ENCODE measurements at regions of chr12 and their contacts with region 1.

Region 1: GRCh38 chr12:132908145-132909044 is 21.0 kb upstream of the CHFR start:
- DNase-seq: peak; percentile 99
- ATAC-seq: peak; percentile 94
- H3K4me3 Mint-ChIP-seq: peak overlapping the region; percentile 84
- H3K27ac Mint-ChIP-seq: peak overlapping the region; percentile 88
- H3K4me1 Mint-ChIP-seq: peaks cover 17% of the 10 kb centered on the region
- H3K27me3 Mint-ChIP-seq: peaks cover 2% of the 10 kb centered on the region

Region 2: DNA sequence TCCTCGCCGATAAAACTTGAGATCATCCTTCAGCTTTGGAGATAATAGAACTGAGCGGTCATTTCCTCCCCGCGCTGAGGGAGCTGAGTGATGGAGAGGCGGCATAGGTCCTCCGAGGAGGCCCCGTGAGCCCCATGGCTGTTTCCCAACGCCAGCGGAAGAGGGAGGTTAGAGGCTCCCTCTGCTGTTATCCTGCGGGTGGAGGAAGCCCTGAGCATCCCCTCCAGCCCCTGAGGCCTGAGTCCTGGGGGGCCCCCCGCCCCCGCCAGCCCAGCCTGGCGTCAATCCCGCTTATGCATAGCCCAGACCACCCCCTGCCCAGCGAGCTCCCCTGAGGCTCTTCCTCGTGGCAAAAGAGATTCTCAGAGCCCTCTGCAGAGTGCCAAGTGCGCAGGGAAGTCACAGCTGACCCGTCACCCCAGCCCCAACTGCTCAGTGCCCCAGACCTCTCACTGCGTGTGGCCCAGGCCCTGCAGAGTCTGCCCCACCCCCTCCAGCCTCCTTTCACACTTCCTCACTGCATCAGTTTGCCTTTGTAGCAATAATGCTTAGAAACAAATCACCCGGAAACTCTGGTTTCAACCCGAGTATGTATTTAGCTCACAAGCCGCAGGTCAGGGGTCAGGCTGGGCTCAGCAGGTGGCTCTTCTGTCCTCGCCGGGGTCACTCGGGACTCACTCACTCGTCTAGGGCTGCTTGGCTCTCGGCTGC is 534.3 kb before region 1 on chr12:
- CTCF ChIA-PET with region 1: no interaction called
- POLR2A ChIA-PET with region 1: no interaction called
- intact Hi-C with region 1: no loop called
- DNase-seq: no peak
- ATAC-seq: no peak
- H3K4me3 Mint-ChIP-seq: no peak overlapping the region
- H3K27ac Mint-ChIP-seq: no peak overlapping the region
- H3K4me1 Mint-ChIP-seq: no peaks in the 10 kb centered on the region
- H3K27me3 Mint-ChIP-seq: peaks cover 52% of the 10 kb centered on the region

Region 3: DNA sequence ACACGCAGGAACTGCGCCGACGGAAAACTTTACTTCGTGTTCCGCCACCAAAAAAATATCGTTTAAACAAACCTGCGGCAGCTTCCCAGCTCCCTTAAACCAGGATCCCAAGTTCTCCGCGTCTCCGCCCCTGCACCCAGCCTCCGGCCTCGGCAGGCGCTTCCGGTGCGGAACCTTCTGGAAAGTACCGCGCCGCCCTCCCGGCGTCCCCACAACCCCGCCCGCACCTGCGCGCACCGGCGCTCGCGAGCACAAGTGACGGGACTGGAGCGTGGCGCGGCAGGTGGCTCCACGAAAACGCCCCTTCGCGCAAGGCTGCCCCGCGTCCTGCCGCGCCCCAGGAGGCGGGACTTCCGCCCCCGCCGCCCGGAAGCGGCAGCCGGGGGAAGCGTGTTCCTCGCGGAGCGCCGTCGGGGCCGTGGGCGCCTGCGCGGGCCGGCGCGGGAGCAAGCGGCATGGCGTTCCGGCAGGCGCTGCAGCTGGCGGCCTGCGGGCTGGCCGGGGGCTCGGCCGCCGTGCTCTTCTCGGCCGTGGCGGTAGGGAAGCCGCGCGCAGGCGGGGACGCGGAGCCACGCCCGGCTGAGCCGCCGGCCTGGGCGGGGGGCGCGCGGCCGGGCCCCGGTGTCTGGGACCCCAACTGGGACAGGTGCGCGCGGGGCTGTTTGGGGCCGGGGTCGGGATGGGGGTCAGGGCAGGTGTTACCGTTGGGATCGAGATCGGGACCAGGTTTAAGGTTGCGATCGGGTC is 197.8 kb before region 1 on chr12 and contains the start of gene PGAM5:
- CTCF ChIA-PET with region 1: no interaction called
- POLR2A ChIA-PET with region 1: no interaction called
- intact Hi-C with region 1: loop called in 1 of 2 experiments (anchors 1 kb)
- DNase-seq: peak; percentile 92
- ATAC-seq: peak; percentile 92
- H3K4me3 Mint-ChIP-seq: peak within 1 kb of the TSS; percentile 75
- H3K27ac Mint-ChIP-seq: peak within 1 kb of the TSS; percentile 66
- H3K4me1 Mint-ChIP-seq: peaks cover 24% of the 10 kb centered on the region
- H3K27me3 Mint-ChIP-seq: no peaks in the 10 kb centered on the region
- total RNA-seq, gene PGAM5: 65.6 to 74.0 TPM

Region 4: DNA sequence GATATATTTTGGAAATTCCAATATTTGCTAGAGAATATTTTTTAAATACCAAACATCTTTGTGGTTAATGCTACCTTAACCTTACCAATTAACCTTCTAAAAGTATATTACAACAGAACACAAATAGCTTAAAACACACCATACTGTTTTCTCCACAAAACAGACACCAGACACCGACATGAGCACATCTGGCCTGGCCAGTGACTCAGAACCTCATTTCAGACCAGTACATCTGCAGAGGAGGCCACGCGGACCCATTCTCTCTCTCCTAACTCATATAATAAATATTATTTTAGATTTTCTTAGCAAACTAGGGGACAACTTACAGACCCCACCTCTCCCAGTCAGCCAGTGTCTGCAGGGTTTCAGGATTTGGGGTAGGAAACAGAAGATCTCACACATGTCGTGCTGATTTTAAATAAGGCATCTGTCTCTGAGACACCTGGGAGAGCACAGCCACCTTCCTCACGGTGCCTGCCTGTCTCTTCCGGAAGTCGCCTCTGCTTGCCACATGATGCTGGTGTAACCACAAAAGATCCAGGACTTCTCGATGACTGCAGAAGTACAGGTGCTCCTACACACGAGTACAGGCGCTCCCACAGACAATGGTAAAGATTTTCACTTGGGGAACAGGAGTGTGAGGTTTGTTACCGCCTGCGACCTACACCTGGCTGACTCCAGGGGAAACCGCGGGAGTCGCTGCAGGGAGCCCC is 137.1 kb before region 1 on chr12:
- CTCF ChIA-PET with region 1: interaction called, 14 read pairs
- POLR2A ChIA-PET with region 1: no interaction called
- intact Hi-C with region 1: loop called in 1 of 2 experiments (anchors 1 kb)
- DNase-seq: peak; percentile 71
- ATAC-seq: peak; percentile 82
- H3K4me3 Mint-ChIP-seq: peak overlapping the region; percentile 52
- H3K27ac Mint-ChIP-seq: peak overlapping the region; percentile 89
- H3K4me1 Mint-ChIP-seq: peaks cover 61% of the 10 kb centered on the region
- H3K27me3 Mint-ChIP-seq: no peaks in the 10 kb centered on the region

Region 5: GRCh38 chr12:132797820-132798570 is 110.4 kb before region 1 on chr12:
- CTCF ChIA-PET with region 1: no interaction called
- POLR2A ChIA-PET with region 1: no interaction called
- intact Hi-C with region 1: no loop called
- DNase-seq: no peak
- ATAC-seq: no peak
- H3K4me3 Mint-ChIP-seq: no peak overlapping the region
- H3K27ac Mint-ChIP-seq: no peak overlapping the region
- H3K4me1 Mint-ChIP-seq: no peaks in the 10 kb centered on the region
- H3K27me3 Mint-ChIP-seq: no peaks in the 10 kb centered on the region

Region 6: DNA sequence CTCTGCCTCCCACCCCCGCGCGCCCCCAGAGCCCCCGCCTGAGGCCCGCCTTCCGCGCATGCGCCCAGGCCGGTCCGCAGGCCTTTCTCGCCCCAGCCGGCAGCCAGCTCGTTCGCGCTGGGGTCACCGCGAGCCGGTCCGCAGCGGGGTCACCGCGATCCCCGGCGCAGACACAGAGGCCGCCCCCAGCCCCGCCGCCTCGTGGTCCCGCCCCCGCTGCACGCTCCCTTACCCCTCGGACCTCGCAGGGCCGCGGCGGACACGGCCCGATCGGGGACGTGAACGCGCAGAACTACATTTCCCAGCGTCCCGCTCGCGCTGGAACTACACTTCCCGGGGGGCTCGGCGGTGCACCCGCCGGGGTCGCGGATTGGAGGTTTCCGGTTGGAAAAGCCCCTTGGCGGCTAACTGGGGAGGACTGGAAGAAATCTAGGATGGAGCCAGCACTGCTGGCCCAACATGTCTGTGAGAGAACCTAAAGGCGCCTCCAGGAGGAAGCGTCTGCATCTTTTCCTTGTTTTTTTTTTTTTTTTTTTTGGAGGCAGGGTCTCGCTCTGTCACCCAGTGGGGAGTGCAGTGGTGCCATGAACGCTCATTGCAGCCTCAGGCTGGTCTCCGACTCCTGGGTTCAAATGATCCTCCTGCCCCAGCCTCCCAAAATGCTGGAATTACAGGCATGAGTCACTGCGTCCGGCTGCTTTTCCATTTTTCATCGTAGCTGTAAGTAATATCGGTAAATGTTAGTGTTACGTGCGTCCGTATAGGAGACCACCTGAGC is 47.8 kb after region 1 on chr12 and contains the start of gene ZNF605:
- CTCF ChIA-PET with region 1: no interaction called
- POLR2A ChIA-PET with region 1: no interaction called
- intact Hi-C with region 1: loop called (anchors 1 kb)
- DNase-seq: peak; percentile 93
- ATAC-seq: peak; percentile 91
- H3K4me3 Mint-ChIP-seq: peak within 1 kb of the TSS; percentile 93
- H3K27ac Mint-ChIP-seq: peak within 1 kb of the TSS; percentile 88
- H3K4me1 Mint-ChIP-seq: peaks cover 22% of the 10 kb centered on the region
- H3K27me3 Mint-ChIP-seq: no peaks in the 10 kb centered on the region
- total RNA-seq, gene ZNF605: 8.0 to 8.3 TPM

Region 7: GRCh38 chr12:133037207-133038005 is 129.0 kb after region 1 on chr12 and contains the start of gene ZNF84:
- CTCF ChIA-PET with region 1: no interaction called
- POLR2A ChIA-PET with region 1: no interaction called
- intact Hi-C with region 1: loop called (anchors 1 kb)
- DNase-seq: peak; percentile 98
- ATAC-seq: peak; percentile 97
- H3K4me3 Mint-ChIP-seq: peak within 1 kb of the TSS; percentile 85
- H3K27ac Mint-ChIP-seq: peak within 1 kb of the TSS; percentile 94
- H3K4me1 Mint-ChIP-seq: peaks cover 10% of the 10 kb centered on the region
- H3K27me3 Mint-ChIP-seq: no peaks in the 10 kb centered on the region
- total RNA-seq, gene ZNF84: 21.5 to 24.1 TPM

Region 8: DNA sequence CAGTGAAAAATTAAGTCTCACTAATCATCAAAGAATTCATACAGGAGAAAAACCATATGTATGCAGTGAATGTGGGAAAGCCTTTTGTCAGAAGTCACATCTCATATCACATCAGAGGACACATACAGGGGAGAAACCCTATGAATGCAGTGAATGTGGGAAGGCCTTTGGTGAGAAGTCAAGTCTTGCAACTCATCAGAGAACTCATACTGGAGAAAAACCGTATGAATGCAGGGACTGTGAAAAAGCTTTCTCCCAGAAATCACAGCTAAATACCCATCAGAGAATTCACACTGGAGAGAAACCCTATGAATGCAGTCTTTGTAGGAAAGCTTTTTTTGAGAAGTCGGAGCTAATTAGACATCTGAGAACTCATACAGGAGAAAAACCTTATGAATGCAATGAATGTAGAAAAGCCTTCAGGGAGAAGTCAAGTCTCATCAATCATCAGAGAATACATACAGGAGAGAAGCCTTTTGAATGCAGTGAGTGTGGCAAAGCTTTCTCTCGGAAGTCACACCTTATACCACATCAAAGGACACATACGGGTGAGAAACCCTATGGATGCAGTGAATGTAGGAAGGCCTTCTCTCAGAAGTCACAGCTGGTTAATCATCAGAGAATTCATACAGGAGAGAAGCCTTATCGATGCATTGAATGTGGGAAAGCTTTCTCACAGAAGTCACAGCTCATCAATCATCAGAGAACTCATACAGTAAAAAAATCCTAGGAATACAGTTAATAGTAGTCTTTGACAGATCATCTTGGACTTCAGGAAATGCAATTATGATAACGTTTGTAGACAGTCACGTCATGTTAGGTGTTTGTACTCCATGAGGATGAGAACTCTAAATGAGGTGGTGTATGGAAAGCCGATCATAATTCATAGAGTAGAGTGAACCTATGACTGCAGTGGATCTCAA is 150.1 kb after region 1 on chr12:
- CTCF ChIA-PET with region 1: no interaction called
- POLR2A ChIA-PET with region 1: no interaction called
- intact Hi-C with region 1: no loop called
- DNase-seq: no peak
- ATAC-seq: no peak
- H3K4me3 Mint-ChIP-seq: no peak overlapping the region
- H3K27ac Mint-ChIP-seq: no peak overlapping the region
- H3K4me1 Mint-ChIP-seq: no peaks in the 10 kb centered on the region
- H3K27me3 Mint-ChIP-seq: no peaks in the 10 kb centered on the region

Region 9: DNA sequence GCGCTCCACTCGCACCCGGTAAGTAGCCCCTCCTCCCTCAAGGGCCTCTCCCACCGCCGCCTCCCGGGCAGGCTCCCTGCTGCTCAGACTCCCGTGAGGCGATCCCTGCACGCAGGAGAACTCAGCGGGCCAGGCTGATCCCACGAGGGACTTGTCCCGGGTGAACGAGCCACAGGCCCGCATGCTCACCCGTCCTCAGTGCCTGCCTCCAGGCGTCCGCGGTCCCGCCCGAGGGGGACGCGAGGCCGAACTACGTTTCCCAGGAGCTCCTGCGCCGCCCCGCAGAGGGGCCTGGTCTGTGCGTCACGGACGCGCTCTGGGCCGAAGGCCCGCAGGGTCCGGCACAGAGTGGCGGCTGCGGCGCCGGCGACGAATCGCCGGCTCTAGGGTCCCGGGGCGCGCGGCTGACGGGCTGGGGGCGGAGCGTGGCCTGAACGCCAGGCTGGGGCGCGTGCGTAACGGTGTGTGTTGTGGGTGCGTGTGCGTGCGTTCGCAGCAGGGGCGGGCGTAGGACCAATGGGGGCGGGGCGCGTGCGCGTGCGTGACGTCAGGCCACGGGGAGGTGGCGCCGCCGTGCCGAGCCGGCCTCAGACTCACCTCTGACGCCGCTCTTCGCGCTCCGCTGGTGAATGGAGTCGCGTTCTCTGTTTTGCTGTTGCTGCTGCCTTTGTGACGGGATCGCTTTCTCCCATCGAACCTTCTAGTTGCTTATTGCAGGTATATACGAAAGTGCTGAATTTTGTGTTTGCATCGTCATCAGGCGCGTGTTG is 221.8 kb after region 1 on chr12 and contains the starts of genes ZNF10 and ZNF891:
- CTCF ChIA-PET with region 1: no interaction called
- POLR2A ChIA-PET with region 1: no interaction called
- intact Hi-C with region 1: loop called in 1 of 2 experiments (anchors 1 kb)
- DNase-seq: peak; percentile 98
- ATAC-seq: peak; percentile 90
- H3K4me3 Mint-ChIP-seq: peak within 1 kb of the TSS; percentile 86
- H3K27ac Mint-ChIP-seq: peak within 1 kb of the TSS; percentile 98
- H3K4me1 Mint-ChIP-seq: peaks cover 15% of the 10 kb centered on the region
- H3K27me3 Mint-ChIP-seq: no peaks in the 10 kb centered on the region
- total RNA-seq, gene ZNF10: 4.8 to 5.1 TPM
- total RNA-seq, gene ZNF891: 1.9 to 2.1 TPM

Measured in activated CD4-positive, alpha-beta T cell treated with anti-CD3 and anti-CD28 coated beads for 36 hours (primary cell).